ENCODE measurements at regions of chr22 and their contacts with region 1.

Region 1: DNA sequence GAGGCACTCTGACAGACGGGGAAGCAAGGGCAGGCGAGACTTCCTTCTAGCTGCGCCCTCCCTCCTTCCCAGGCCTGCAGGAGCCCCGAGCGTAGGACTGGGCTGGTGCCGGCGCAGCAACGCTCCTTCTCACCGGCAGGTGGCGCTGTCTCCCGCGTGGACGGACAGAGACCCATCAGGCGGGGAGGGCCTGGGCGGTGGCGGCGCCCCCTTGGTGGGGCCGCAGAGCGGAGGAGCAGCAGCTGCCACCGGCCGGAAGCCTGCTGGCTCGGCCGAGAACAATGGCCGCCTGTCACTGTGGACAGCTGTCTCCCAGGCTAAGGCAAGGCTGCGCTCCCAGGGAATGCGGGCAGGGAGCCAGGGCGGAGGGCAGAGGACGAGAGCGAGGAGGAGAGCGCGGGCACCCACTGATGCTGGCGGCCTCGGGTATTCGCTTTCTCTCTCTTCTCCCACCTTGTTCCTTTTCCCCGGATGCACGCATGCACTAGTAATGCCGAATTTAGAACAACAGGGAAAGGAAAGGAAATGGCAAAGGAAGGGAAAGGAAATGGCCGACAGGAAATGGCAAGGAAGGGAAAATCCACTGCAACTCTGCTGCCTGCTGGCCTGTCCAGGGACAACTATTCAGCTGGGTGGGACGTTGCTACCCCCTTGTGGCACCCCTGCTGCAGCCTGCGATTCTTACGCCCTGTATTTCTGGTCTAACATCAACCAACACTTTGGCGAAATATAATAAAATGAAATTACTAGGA is 14.4 kb downstream of the PPM1F start:
- DNase-seq: peak; percentile 30
- H3K4me3 ChIP-seq: peak overlapping the region; percentile 47
- H3K27me3 ChIP-seq: no peaks in the 10 kb centered on the region
- CTCF ChIP-seq: peak; percentile 98

Region 2: GRCh38 chr22:21698430-21699329 is 239.6 kb before region 1 on chr22:
- CTCF ChIA-PET with region 1: interaction called, 35 read pairs
- POLR2A ChIA-PET with region 1: no interaction called
- DNase-seq: peak; percentile 27
- H3K4me3 ChIP-seq: no peak overlapping the region
- H3K27me3 ChIP-seq: no peaks in the 10 kb centered on the region
- CTCF ChIP-seq: no peak

Region 3: DNA sequence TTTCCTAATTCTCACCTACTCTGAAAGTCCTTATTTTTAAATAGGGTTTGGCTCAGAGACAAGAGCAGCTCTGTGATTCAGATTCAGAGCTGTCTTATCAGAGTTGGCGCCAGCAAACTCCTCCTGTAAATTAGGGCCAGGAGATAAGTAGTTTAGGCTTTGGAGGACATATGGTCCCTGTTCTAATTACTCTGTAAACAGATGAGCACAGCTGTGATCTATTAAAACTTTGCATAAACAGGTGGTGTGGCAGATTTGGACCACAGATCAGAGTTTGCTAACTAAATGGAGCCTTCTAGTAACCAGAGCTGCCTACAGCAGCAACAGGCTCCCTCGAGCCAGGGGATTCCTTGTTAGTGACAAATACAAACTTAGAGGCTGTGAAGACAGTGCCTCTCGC is 230.6 kb before region 1 on chr22:
- CTCF ChIA-PET with region 1: interaction called, 59 read pairs
- POLR2A ChIA-PET with region 1: interaction called, 14 read pairs
- DNase-seq: no peak
- H3K4me3 ChIP-seq: no peak overlapping the region
- H3K27me3 ChIP-seq: no peaks in the 10 kb centered on the region
- CTCF ChIP-seq: no peak

Region 4: GRCh38 chr22:21712894-21713712 is 225.1 kb before region 1 on chr22:
- CTCF ChIA-PET with region 1: interaction called, 59 read pairs
- POLR2A ChIA-PET with region 1: interaction called, 14 read pairs
- DNase-seq: peak; percentile 15
- H3K4me3 ChIP-seq: no peak overlapping the region
- H3K27me3 ChIP-seq: no peaks in the 10 kb centered on the region
- CTCF ChIP-seq: peak; percentile 85

Region 5: DNA sequence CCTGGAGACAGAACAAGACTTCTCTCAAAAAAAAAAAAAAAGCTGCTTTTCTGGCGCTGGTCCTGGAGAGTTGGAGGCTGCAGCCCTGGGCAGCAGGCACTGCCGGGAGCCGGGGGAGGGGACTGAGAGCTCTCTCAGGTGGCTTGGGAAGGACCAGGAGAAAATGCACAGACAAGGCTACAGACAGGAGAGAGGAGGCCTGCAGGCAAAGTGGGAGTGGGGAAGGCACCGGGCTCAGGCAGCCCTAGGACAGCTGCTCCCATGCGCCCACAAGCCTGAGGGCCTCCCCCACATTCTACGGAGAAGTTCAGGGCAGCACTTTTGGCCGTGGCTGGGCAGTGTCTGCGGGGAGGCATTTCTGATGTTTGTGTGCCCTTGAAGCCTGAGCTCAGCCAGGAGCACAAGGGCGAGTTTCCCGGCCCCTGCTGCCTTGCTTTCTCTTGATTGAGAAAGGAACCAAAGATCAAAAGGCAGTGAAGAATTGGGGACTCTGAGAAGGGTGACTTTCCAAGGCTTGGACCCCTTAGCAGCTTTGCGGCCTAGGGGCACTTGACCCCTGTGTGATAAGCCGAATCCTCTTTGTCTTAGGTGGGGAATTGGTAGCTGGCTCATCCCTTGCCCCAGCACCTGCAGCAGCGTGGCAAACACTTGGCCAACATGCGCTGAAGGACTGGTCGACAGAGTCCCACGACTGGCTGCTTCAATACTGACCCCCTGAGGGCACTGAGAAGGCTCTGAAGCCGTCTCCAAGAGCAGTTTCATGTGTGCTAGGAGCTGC is 20.9 kb before region 1 on chr22:
- CTCF ChIA-PET with region 1: interaction called, 44 read pairs
- POLR2A ChIA-PET with region 1: no interaction called
- DNase-seq: no peak
- H3K4me3 ChIP-seq: no peak overlapping the region
- H3K27me3 ChIP-seq: no peaks in the 10 kb centered on the region
- CTCF ChIP-seq: no peak

Region 6: GRCh38 chr22:21952586-21953571 is 14.6 kb after region 1 on chr22 and contains the start of gene PPM1F:
- CTCF ChIA-PET with region 1: interaction called, 80 read pairs
- POLR2A ChIA-PET with region 1: no interaction called
- DNase-seq: peak; percentile 9
- H3K4me3 ChIP-seq: peak within 1 kb of the TSS; percentile 97
- H3K27me3 ChIP-seq: no peaks in the 10 kb centered on the region
- CTCF ChIP-seq: peak; percentile 74
- polyA plus RNA-seq, gene PPM1F: 20.1 and 25.3 TPM in 2 replicates

Region 7: DNA sequence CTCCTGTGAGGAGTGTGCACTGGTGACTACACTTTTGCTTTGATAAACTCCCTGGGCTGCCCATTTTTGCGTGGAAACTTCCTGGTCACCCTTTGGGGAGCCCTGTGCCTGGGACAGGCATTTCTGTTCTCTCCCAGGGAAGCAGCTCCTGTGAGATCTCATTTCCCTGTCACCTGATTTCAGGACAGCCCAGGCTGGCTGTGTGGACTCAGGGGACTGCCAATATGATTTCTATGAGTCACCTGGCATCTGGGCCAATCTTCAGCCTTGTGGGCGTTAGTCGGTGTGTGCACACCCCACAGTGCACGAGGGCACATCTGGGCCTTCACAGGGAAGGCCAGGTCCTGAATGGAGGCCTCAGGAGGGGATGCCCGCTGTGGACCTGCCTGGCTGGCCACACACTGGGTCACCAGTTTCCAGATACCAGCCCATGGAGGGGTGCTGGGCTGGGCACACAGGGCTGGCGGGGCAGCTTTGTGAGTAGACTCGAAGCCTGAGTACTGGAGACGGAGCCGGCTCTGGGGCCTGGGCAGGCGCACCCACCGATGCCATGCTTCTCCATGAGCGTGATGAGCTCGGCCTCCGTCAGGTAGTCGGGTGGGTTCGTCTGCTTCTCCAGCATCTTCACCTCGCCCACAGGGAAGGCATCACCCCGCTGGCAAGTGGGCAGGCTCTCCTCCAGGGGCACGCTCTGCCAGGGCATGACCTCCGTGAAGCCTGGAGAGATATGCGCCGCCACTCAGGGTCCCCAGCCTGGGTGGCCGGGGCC is 23.8 kb after region 1 on chr22:
- CTCF ChIA-PET with region 1: interaction called, 11 read pairs
- POLR2A ChIA-PET with region 1: no interaction called
- DNase-seq: no peak
- H3K4me3 ChIP-seq: no peak overlapping the region
- H3K27me3 ChIP-seq: no peaks in the 10 kb centered on the region
- CTCF ChIP-seq: no peak